GM10248 (cell line): ENCODE measurements at regions of chr17 and their contacts with region 1.

Region 1: DNA sequence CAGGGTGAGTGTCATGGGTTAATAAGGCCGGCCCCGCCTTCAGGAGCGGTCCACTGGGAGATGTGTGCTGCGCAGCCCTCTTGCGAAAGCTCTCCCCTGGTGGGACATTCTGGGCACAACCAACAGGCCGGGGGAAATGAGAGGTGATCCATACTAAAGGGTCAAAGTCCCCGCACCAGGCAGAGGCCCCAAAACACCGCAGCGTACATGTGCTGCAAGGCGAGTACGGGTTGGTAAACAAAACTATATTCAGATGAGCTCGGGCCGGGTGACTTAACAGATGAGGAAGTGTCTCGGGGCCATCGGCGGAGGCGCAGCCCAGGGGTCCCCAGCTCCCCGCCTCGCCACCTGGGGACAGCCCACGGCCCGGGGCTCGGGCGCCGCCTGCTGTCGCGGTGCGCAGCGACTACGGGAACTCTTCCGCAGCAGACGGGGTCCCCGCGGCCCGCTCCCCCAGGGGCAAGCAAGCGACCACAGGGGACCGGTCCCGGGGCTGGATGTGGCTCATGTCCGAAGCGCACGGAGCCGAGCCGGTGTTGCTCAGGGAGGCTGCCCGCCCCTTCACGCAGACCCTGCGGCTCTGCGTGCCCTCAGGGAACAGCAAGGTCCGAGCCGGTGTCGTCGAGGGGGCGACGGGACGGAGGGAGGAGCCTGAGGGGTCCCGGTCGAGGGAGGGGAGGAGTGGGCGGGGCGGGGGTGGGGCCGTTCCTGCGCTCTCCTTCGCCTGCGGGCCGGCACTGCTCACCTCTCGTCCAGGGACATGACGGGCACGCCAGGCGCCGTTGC is at the start of gene RAB37:
- DNase-seq: peak; percentile 75
- CTCF ChIP-seq: peak; percentile 79

Region 2: GRCh38 chr17:74639704-74640151 is 97.0 kb before region 1 on chr17:
- CTCF ChIA-PET with region 1: interaction called, 12 read pairs
- POLR2A ChIA-PET with region 1: no interaction called
- DNase-seq: peak; percentile 43
- CTCF ChIP-seq: no peak

Region 3: GRCh38 chr17:74671031-74671771 is 65.5 kb before region 1 on chr17:
- CTCF ChIA-PET with region 1: interaction called, 14 read pairs
- POLR2A ChIA-PET with region 1: no interaction called
- DNase-seq: peak; percentile 63
- CTCF ChIP-seq: no peak

Region 4: DNA sequence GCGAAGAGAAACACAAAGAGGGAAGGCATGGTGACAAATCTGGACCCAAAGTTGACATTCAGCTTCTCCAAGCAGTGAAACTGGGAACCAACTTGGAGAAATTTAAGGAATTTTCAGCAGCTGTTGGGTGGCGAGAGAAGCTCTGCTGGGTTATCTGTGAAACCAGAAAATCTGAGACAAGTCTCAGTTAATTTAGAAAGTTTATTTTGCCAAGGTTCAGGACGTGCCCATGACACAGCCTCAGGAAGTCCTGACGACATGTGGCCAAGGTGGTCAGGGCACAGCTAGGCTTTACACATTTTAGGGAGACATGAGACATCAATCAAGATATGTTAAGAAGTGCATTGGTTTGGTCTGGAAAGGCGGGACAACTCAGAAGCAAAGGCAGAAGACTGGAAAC is 12.8 kb before region 1 on chr17:
- CTCF ChIA-PET with region 1: interaction called, 26 read pairs
- POLR2A ChIA-PET with region 1: interaction called, 4 read pairs
- DNase-seq: no peak
- CTCF ChIP-seq: no peak

Region 5: GRCh38 chr17:74759243-74759801 is 22.6 kb after region 1 on chr17:
- CTCF ChIA-PET with region 1: interaction called, 44 read pairs
- POLR2A ChIA-PET with region 1: no interaction called
- DNase-seq: peak; percentile 69
- CTCF ChIP-seq: peak; percentile 16

Region 6: GRCh38 chr17:74776044-74776977 is 39.6 kb after region 1 on chr17 and contains the start of gene NAT9:
- CTCF ChIA-PET with region 1: interaction called, 19 read pairs
- POLR2A ChIA-PET with region 1: no interaction called
- DNase-seq: peak; percentile 100
- CTCF ChIP-seq: no peak